Adrenal gland (tissue), 19 donors: ENCODE measurements at regions of chr2 and their contacts with region 1.

Region 1: DNA sequence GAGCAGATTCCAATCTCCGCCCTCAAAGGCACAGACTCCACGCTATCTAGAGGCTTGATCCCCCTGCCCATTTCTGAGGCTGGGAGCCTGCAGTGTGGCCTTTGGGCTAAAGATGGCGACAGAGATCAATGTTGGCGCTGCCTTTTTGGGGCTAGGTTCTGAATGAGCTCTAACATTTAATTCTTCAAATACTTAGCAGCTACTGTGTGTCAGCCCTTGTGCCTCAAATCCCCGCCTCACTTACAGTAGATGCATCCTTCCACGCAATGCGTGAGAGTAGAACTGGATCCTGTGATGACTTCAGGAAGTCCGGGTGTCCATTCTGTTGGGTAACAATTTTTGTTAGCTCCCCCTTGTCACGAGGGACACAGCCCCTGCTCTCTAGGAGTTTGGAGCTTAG is 12.4 kb downstream of the IL1F10 start:
- DNase-seq: peak; percentile 35 to 65 (median 51)
- H3K4me3 ChIP-seq: no peak overlapping the region
- H3K27ac ChIP-seq: no peak overlapping the region
- H3K4me1 ChIP-seq: no peaks in the 10 kb centered on the region
- H3K27me3 ChIP-seq: no peaks in the 10 kb centered on the region
- CTCF ChIP-seq: peak; percentile 46 to 72 (median 66)
- POLR2A ChIP-seq: no peak

Region 2: GRCh38 chr2:113126845-113127645 is 46.9 kb after region 1 on chr2 and contains the start of gene IL1RN:
- intact Hi-C with region 1: loop called (anchors 5 kb)
- DNase-seq: peak in 3 of 7 donors; percentile 31 to 47 (median 42)
- H3K4me3 ChIP-seq: no peak within 1 kb of the TSS
- H3K27ac ChIP-seq: peak within 1 kb of the TSS in 4 of 5 donors; percentile 7 to 77 (median 33)
- H3K4me1 ChIP-seq: peaks cover 32 to 39% of the 10 kb centered on the region in 2 donors
- H3K27me3 ChIP-seq: no peaks in the 10 kb centered on the region
- CTCF ChIP-seq: no peak
- POLR2A ChIP-seq: no peak
- total RNA-seq, gene IL1RN: 0.22 to 6.1 (median 1.1) TPM in 7 of 9 donors, not detected in the others

Region 3: GRCh38 chr2:113198790-113199612 is 118.9 kb after region 1 on chr2:
- intact Hi-C with region 1: loop called (anchors 2 to 5 kb)
- DNase-seq: peak; percentile 84 to 89 (median 86)
- H3K4me3 ChIP-seq: peak overlapping the region; percentile 7 to 68 (median 40)
- H3K27ac ChIP-seq: peak overlapping the region; percentile 65 to 92 (median 83)
- H3K4me1 ChIP-seq: peaks cover 8 to 20% of the 10 kb centered on the region in 2 donors
- H3K27me3 ChIP-seq: no peaks in the 10 kb centered on the region
- CTCF ChIP-seq: peak; percentile 70 to 99 (median 85)
- POLR2A ChIP-seq: peak in 1 of 2 donors; percentile 67

Region 4: GRCh38 chr2:113298176-113298575 is 218.0 kb after region 1 on chr2:
- intact Hi-C with region 1: no loop called
- DNase-seq: no peak
- H3K4me3 ChIP-seq: no peak overlapping the region
- H3K27ac ChIP-seq: no peak overlapping the region
- H3K4me1 ChIP-seq: no peaks in the 10 kb centered on the region
- H3K27me3 ChIP-seq: no peaks in the 10 kb centered on the region
- CTCF ChIP-seq: no peak
- POLR2A ChIP-seq: no peak